ENCODE measurements at regions of chr19 and their contacts with region 1.

Region 1: DNA sequence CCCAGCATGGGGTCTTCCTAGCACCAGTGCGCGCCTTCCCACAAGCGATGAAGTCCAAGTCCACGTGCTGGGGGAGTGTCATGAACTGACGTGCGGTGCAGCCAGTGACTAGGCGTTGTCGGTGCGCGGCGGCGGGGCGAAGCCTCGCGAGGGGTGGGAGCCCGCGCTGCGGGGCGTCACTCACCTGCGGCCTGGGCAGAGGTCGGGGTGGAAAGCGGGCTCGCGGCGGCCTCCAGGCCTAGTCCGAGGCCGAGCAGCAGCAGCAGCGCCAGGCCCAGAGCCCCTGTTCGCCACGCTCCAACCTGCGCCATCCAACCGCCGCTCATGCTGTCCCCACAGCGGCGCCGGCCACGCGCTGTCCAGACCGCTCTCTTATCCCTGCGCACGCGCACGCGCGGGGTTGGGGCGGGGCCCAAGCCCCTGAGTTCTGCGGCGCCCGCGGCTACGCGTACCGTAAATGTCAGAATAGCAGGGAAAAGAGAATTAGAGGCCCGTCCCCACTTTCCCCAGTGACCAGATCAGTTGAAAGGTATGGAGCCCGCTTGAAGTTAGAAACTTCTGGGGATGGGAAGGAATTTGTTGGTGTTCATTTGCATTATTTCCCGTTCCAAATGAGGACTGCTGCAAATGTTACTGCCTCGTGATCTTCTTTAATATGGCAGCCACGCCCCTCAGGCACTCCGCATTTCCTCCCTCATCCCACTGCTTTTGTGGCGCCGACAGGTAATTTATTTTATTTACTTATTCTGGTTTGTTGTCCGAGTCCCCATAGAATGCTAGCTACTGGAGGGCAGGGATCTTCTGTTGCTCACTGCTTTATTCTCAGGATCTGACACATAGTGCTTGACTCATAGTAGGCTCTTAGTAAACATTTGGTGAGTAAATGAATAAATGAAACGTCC is at the start of gene CD320:
- DNase-seq: peak; percentile 90
- H3K4me3 Mint-ChIP-seq: peak within 1 kb of the TSS; percentile 96
- H3K27ac Mint-ChIP-seq: peak within 1 kb of the TSS; percentile 92
- H3K4me1 Mint-ChIP-seq: peaks cover 31% of the 10 kb centered on the region
- H3K27me3 Mint-ChIP-seq: no peaks in the 10 kb centered on the region
- total RNA-seq, gene CD320: 44.9 to 45.4 TPM

Region 2: GRCh38 chr19:8214802-8215201 is 93.4 kb before region 1 on chr19:
- CTCF ChIA-PET with region 1: no interaction called
- POLR2A ChIA-PET with region 1: no interaction called
- intact Hi-C with region 1: no loop called
- DNase-seq: no peak
- H3K4me3 Mint-ChIP-seq: no peak overlapping the region
- H3K27ac Mint-ChIP-seq: no peak overlapping the region
- H3K4me1 Mint-ChIP-seq: peaks cover 18% of the 10 kb centered on the region
- H3K27me3 Mint-ChIP-seq: no peaks in the 10 kb centered on the region

Region 3: DNA sequence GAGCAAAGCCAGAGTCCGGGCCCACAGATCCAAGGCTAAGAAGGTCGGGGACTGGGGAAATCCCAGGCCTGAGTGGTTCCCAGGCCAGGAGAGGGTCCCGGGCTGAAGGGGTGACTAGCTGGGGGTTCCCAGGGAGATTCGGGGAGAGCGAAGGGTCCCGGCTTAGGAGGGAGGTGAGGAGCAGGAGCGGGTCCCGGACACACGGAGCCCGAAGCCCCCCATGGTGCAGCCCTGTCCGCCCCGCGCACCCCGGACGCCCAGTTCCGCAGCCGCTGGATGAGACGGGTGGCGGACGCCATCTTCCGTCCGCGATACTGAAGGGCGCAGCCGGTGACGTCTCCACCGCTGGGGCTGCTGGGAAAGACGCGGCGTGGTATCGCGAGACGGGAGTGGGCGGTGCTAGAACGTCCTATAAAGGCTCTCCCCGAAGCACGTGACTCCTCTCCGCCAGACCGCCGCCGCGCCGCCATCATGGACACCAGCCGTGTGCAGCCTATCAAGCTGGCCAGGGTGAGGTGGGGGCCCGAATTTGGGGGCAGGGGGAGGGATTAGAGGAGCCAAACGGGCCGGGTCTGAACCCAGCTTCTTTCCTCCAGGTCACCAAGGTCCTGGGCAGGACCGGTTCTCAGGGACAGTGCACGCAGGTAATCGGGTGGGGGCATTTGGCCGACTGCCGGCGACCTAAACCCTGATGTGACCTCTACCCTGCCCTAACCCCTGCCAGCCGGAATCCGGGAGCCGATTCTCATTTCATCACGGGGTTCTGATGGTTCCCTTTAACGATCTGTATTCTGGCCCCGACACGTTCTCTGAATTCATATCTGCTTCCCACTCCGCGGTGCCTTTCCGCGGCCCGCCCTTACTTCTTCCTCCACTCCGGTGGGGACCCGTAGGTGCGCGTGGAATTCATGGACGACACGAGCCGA is 13.1 kb after region 1 on chr19 and contains the starts of genes NDUFA7 and RPS28:
- CTCF ChIA-PET with region 1: no interaction called
- POLR2A ChIA-PET with region 1: interaction called, 4 read pairs
- intact Hi-C with region 1: loop called (anchors 1 kb)
- DNase-seq: peak; percentile 99
- H3K4me3 Mint-ChIP-seq: peak within 1 kb of the TSS; percentile 99
- H3K27ac Mint-ChIP-seq: peak within 1 kb of the TSS; percentile 91
- H3K4me1 Mint-ChIP-seq: peaks cover 33% of the 10 kb centered on the region
- H3K27me3 Mint-ChIP-seq: no peaks in the 10 kb centered on the region
- total RNA-seq, gene NDUFA7: 84.2 to 85.1 TPM
- total RNA-seq, gene RPS28: 2,068 to 2,091 TPM